A549 (cell line): ENCODE measurements at regions of chr11 and their contacts with region 1.

Region 1: DNA sequence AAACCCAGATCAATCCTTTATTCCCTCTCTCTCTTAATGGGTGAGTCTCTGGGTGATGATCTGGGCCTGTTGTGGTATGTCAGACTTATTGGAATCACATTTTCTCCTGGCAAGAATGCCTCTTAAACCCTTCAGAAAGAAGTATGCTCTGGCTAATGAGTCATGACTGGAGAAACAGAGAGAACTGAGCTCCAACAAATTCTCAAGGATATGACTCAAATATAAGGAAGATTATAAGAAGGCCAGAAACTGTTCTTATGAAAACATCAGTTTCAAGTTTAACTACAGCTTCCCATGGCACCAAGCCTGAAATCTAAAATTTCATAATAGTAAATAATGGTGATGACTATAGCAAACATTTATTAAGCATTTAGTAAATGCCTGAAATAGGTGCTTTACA is 83.9 kb downstream of the OR5AK2 start:
- DNase-seq: peak; percentile 78 to 93
- ATAC-seq: peak; percentile 95 to 97
- H3K4me3 ChIP-seq: no peak overlapping the region
- H3K27ac ChIP-seq: peak overlapping the region; percentile 90 to 91
- H3K4me1 ChIP-seq: peaks cover 30% of the 10 kb centered on the region
- CTCF ChIP-seq: no peak
- EP300 ChIP-seq: peak; percentile 84 to 91
- POLR2A ChIP-seq: no peak
- RAD21 ChIP-seq: peak; percentile 25 to 67; a peak in 4 of 5 replicates

Region 2: GRCh38 chr11:56846631-56847576 is 225.7 kb before region 1 on chr11:
- CTCF ChIA-PET with region 1: interaction called, 7 read pairs
- POLR2A ChIA-PET with region 1: interaction called, 11 read pairs
- DNase-seq: no peak
- ATAC-seq: peak in 1 of 2 experiments; percentile 14; a peak in 2 of 6 replicates
- H3K4me3 ChIP-seq: no peak overlapping the region
- H3K27ac ChIP-seq: peak overlapping the region; percentile 88 to 94
- H3K4me1 ChIP-seq: peaks cover 43% of the 10 kb centered on the region
- CTCF ChIP-seq: no peak
- EP300 ChIP-seq: no peak
- POLR2A ChIP-seq: no peak
- RAD21 ChIP-seq: no peak

Region 3: DNA sequence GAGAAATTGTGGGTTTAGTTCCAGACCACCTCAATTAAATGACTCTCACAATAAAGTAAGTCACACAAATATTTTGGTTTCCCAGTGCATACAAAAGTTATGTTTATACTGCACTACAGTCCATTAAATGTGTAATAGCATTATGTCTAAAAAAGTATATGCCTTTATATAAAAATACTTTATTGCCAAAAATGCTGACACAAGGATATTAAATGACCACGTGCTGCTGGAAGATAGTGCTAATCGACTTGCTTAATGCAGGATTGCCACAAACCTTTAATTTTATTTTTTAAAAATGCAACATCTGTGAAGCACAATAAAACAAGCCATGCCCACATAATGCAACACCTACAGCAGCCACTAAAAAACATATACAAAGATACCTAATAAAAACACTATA is 57.0 kb before region 1 on chr11:
- CTCF ChIA-PET with region 1: no interaction called
- POLR2A ChIA-PET with region 1: no interaction called
- DNase-seq: no peak
- ATAC-seq: no peak
- H3K4me3 ChIP-seq: no peak overlapping the region
- H3K27ac ChIP-seq: no peak overlapping the region
- H3K4me1 ChIP-seq: no peaks in the 10 kb centered on the region
- CTCF ChIP-seq: no peak
- EP300 ChIP-seq: no peak
- POLR2A ChIP-seq: no peak
- RAD21 ChIP-seq: no peak